ENCODE measurements at regions of chr10 and their contacts with region 1.

Region 1: DNA sequence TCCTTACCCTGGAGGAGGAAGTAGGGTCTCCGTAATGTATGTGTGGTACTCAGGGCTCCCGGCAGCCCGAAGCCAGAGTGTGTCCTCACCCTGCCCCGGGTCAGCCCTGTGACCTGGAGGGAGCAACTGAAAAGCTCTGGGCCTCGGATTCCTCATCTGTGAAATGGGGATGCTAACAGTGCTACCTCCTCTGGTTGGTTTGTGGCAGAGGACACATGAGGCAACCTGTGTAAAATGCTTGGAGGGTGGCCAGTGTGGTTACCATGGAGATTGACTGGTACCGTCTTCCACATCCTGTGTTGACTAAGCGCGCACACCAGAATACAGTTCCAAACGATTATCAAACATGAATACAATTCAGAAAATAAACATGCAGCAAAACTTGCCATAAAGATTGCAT is 163.8 kb upstream of the KLF6 start:
- DNase-seq: no peak

Region 2: DNA sequence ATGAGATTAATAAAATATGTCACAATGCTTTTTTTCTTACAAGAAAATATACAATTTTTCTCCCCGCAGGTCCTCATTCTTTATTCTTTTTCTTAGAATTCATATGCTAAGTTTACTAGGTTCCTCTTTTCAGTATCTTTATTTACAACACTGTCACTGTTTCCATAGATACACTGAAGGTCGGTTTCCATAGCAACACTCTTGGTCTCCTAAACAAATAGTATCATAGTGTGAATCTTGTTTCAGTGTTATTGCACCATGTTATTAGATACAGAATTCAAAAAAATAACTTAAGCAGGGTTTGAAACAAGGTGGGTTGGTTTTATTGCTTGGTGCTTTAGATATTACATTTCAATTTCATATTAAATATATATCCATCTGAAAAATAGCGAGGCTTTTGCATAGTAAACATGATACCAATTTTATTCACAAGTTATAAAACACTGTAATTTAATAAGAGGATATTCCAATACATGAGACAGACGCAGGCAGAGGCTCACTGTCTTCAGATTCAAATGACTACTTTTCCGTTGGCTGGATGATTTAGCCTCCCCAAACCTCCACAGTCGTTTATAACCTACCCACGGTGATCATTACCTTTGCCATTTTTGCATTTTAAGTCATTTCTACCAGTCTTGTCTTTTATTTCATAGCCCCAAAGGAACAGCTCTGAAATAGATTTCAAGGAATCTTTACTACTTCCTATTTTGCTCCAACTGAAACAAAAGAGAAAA is 74.9 kb before region 1 on chr10:
- intact Hi-C with region 1: no loop called
- DNase-seq: no peak

Region 3: DNA sequence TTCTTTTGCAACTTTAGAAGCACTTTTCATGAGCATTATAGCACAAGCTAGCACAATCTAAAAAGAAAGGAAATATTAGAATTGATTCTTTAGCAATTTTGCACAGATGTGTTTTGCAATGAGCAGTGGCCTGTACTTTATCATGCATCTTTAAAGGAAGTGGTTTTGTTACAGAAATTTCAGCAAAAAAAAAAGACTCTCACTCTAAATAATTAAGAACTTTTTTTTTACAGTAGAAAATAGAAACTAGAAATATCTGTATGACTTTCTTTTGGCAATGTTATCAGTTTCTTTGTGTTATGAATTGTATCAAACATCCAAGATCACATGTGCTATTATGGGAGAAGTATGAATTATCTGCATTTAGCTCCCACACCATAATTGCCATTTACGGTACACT is 31.8 kb after region 1 on chr10:
- intact Hi-C with region 1: loop called (anchors 5 kb)
- DNase-seq: no peak

Measured in cardiac septum (tissue), 1 donor.